ENCODE measurements at regions of chr3 and their contacts with region 1.

Region 1: GRCh38 chr3:195522254-195523023 is 20.7 kb downstream of the PPP1R2 start:
- DNase-seq: peak; percentile 64
- H3K4me3 ChIP-seq: no peak overlapping the region
- H3K27ac ChIP-seq: no peak overlapping the region
- H3K4me1 ChIP-seq: no peaks in the 10 kb centered on the region
- H3K27me3 ChIP-seq: no peaks in the 10 kb centered on the region
- CTCF ChIP-seq: peak; percentile 76

Region 2: GRCh38 chr3:194671900-194672808 is 850.3 kb before region 1 on chr3 and contains the start of gene LSG1:
- CTCF ChIA-PET with region 1: no interaction called
- POLR2A ChIA-PET with region 1: no interaction called
- intact Hi-C with region 1: loop called (anchors 5 kb)
- DNase-seq: peak; percentile 97
- H3K4me3 ChIP-seq: peak within 1 kb of the TSS; percentile 72
- H3K27ac ChIP-seq: peak within 1 kb of the TSS; percentile 99
- H3K4me1 ChIP-seq: peaks cover 17% of the 10 kb centered on the region
- H3K27me3 ChIP-seq: no peaks in the 10 kb centered on the region
- CTCF ChIP-seq: no peak
- total RNA-seq, gene LSG1: 64.0 and 81.3 TPM in 2 replicates

Measured in A673 (cell line).